ENCODE measurements at regions of chr2 and their contacts with region 1.

Region 1: DNA sequence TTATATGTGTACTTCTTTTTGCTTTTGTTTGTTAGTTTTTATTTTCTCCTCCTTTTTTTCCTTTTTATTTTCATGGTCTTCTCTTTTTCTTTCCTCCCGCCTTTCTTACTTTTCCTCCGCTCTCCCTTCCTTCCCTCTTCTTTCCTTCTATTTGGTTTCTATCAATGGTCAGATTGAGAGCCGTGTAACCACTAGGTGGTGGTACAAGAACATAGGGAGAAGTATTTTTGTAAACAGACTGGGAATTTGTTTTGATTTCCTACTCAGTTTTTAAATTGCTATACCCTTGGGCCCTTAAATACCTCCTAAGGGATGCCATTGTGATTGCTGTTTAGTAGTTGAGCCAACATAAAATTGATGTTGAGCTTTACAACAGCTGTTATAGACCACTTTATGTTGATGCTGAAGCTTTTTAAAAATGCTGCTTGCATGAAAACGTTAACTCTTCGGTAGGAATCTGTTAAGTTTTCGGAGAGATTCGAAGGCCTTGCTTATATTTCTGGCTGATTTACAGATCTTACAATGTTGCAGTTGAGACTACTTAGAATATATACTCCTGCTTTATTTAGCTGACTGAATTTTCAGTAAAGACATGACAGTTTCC is 124.2 kb downstream of the UBE2E3 start:
- DNase-seq: peak; percentile 25
- ATAC-seq: no peak
- H3K4me3 Mint-ChIP-seq: peak overlapping the region; percentile 4
- H3K27ac Mint-ChIP-seq: peak overlapping the region; percentile 44
- H3K4me1 Mint-ChIP-seq: peaks cover 45% of the 10 kb centered on the region
- H3K27me3 Mint-ChIP-seq: no peaks in the 10 kb centered on the region
- CTCF ChIP-seq: peak; percentile 92

Region 2: GRCh38 chr2:181123798-181124231 is 19.2 kb after region 1 on chr2:
- CTCF ChIA-PET with region 1: interaction called, 7 read pairs
- POLR2A ChIA-PET with region 1: interaction called, 4 read pairs
- intact Hi-C with region 1: loop called (anchors 1 kb)
- DNase-seq: peak; percentile 78
- ATAC-seq: peak; percentile 91
- H3K4me3 Mint-ChIP-seq: peak overlapping the region; percentile 61
- H3K27ac Mint-ChIP-seq: peak overlapping the region; percentile 91
- H3K4me1 Mint-ChIP-seq: peaks cover 53% of the 10 kb centered on the region
- H3K27me3 Mint-ChIP-seq: no peaks in the 10 kb centered on the region
- CTCF ChIP-seq: no peak

Region 3: DNA sequence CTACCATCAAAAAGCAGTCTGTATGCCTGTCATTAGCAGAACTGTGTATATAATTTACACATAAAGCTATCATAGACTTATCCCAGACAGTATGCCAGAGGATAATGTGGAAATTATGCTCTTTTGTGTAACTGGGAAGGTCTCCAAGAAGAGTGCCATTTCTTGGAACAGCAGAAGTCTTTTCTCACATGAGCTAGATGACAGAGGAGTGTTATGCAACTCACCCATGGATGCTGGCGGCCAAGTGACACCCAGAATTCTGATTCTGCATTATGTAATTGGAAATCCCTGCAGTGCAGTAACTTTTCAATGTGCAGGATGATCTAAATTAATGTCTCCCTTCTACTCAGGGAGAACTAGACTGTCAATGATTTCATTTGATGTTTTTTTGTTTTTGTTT is 35.8 kb after region 1 on chr2:
- CTCF ChIA-PET with region 1: interaction called, 19 read pairs
- POLR2A ChIA-PET with region 1: no interaction called
- intact Hi-C with region 1: loop called (anchors 2 kb)
- DNase-seq: no peak
- ATAC-seq: no peak
- H3K4me3 Mint-ChIP-seq: no peak overlapping the region
- H3K27ac Mint-ChIP-seq: peak overlapping the region; percentile 97
- H3K4me1 Mint-ChIP-seq: peaks cover 78% of the 10 kb centered on the region
- H3K27me3 Mint-ChIP-seq: no peaks in the 10 kb centered on the region
- CTCF ChIP-seq: no peak

Region 4: DNA sequence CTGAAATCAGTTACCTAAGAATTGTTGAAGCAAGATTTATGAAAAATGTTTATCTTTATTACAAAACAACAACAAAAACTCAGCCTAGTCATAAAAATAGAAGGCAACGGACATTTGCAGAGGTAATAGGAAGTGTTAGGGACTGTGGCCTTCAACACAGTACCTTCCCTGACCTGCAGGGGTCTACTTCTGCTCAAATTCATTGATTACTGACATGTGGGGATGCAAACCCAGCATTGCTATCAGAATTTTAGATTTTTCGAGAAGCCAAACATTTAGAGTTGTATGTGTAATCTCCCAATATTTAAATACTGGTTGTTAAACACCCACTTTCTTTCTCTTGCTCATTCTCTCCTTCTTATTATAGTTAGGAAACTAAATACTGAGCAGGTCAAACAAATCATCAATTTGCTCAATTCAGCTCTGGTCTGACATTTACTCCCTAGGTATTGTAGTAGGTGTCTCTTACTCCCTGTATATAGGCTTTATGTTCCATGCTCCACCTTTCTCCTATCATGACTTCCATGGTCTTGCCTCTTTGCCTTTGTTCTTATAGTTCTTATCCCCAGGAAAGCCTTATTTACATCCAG is 74.3 kb after region 1 on chr2:
- CTCF ChIA-PET with region 1: interaction called, 6 read pairs
- POLR2A ChIA-PET with region 1: no interaction called
- intact Hi-C with region 1: loop called (anchors 5 kb)
- DNase-seq: peak; percentile 68
- ATAC-seq: peak; percentile 77
- H3K4me3 Mint-ChIP-seq: no peak overlapping the region
- H3K27ac Mint-ChIP-seq: peak overlapping the region; percentile 71
- H3K4me1 Mint-ChIP-seq: peaks cover 52% of the 10 kb centered on the region
- H3K27me3 Mint-ChIP-seq: no peaks in the 10 kb centered on the region
- CTCF ChIP-seq: peak; percentile 61

Region 5: GRCh38 chr2:181305301-181306123 is 200.9 kb after region 1 on chr2:
- CTCF ChIA-PET with region 1: interaction called, 15 read pairs
- POLR2A ChIA-PET with region 1: interaction called, 3 read pairs
- intact Hi-C with region 1: loop called (anchors 5 kb)
- DNase-seq: peak; percentile 76
- ATAC-seq: peak; percentile 81
- H3K4me3 Mint-ChIP-seq: peak overlapping the region; percentile 64
- H3K27ac Mint-ChIP-seq: peak overlapping the region; percentile 92
- H3K4me1 Mint-ChIP-seq: peaks cover 58% of the 10 kb centered on the region
- H3K27me3 Mint-ChIP-seq: no peaks in the 10 kb centered on the region
- CTCF ChIP-seq: no peak

Region 6: GRCh38 chr2:181457121-181457740 is 352.6 kb after region 1 on chr2 and contains the start of gene ITGA4:
- CTCF ChIA-PET with region 1: interaction called, 43 read pairs
- POLR2A ChIA-PET with region 1: interaction called, 12 read pairs
- intact Hi-C with region 1: loop called (anchors 2 kb)
- DNase-seq: peak; percentile 90
- ATAC-seq: peak; percentile 80
- H3K4me3 Mint-ChIP-seq: peak within 1 kb of the TSS; percentile 92
- H3K27ac Mint-ChIP-seq: peak within 1 kb of the TSS; percentile 93
- H3K4me1 Mint-ChIP-seq: peaks cover 34% of the 10 kb centered on the region
- H3K27me3 Mint-ChIP-seq: no peaks in the 10 kb centered on the region
- CTCF ChIP-seq: peak; percentile 82
- total RNA-seq, gene ITGA4: 61.6 to 64.5 TPM

Region 7: GRCh38 chr2:181715033-181715630 is 610.5 kb after region 1 on chr2:
- CTCF ChIA-PET with region 1: interaction called, 16 read pairs
- POLR2A ChIA-PET with region 1: no interaction called
- intact Hi-C with region 1: loop called (anchors 10 kb)
- DNase-seq: peak; percentile 88
- ATAC-seq: peak; percentile 80
- H3K4me3 Mint-ChIP-seq: no peak overlapping the region
- H3K27ac Mint-ChIP-seq: no peak overlapping the region
- H3K4me1 Mint-ChIP-seq: no peaks in the 10 kb centered on the region
- H3K27me3 Mint-ChIP-seq: no peaks in the 10 kb centered on the region
- CTCF ChIP-seq: peak; percentile 66

Measured in activated CD8-positive, alpha-beta T cell treated with anti-CD3 and anti-CD28 coated beads for 36 hours (primary cell).